IMR-90 (cell line): ENCODE measurements at regions of chr4 and their contacts with region 1.

Region 1: GRCh38 chr4:183261953-183262775 is 57.9 kb downstream of the CLDN22 start:
- DNase-seq: peak; percentile 80
- ATAC-seq: peak; percentile 76
- H3K4me3 ChIP-seq: no peak overlapping the region
- H3K27ac ChIP-seq: peak overlapping the region; percentile 47; the same call in 1 of the 2 replicates
- H3K4me1 ChIP-seq: peaks cover 21% of the 10 kb centered on the region
- H3K27me3 ChIP-seq: no peaks in the 10 kb centered on the region
- CTCF ChIP-seq: peak; percentile 93
- POLR2A ChIP-seq: no peak
- RAD21 ChIP-seq: peak; percentile 85

Region 2: GRCh38 chr4:182448281-182449151 is 813.6 kb before region 1 on chr4:
- CTCF ChIA-PET with region 1: interaction called, 3 read pairs
- POLR2A ChIA-PET with region 1: no interaction called
- dilution Hi-C with region 1: no loop called
- in situ Hi-C with region 1: loop called (anchors 25 kb)
- intact Hi-C with region 1: no loop called
- DNase-seq: peak; percentile 93
- ATAC-seq: peak; percentile 98
- H3K4me3 ChIP-seq: peak overlapping the region; percentile 62
- H3K27ac ChIP-seq: peak overlapping the region; percentile 50
- H3K4me1 ChIP-seq: no peaks in the 10 kb centered on the region
- H3K27me3 ChIP-seq: no peaks in the 10 kb centered on the region
- CTCF ChIP-seq: no peak
- POLR2A ChIP-seq: peak; percentile 61; the same call in 1 of the 2 replicates
- RAD21 ChIP-seq: 0 out of 2 replicates have a peak, but pooled peaks have one; percentile 13

Region 3: GRCh38 chr4:182806259-182807252 is 455.6 kb before region 1 on chr4:
- CTCF ChIA-PET with region 1: no interaction called
- POLR2A ChIA-PET with region 1: no interaction called
- dilution Hi-C with region 1: no loop called
- in situ Hi-C with region 1: no loop called
- intact Hi-C with region 1: loop called (anchors 5 kb)
- DNase-seq: peak; percentile 59
- ATAC-seq: peak; percentile 97
- H3K4me3 ChIP-seq: peak overlapping the region; percentile 46
- H3K27ac ChIP-seq: peak overlapping the region; percentile 53
- H3K4me1 ChIP-seq: no peaks in the 10 kb centered on the region
- H3K27me3 ChIP-seq: no peaks in the 10 kb centered on the region
- CTCF ChIP-seq: peak; percentile 95
- POLR2A ChIP-seq: 0 out of 2 replicates have a peak, but pooled peaks have one; percentile 47
- RAD21 ChIP-seq: peak; percentile 89

Region 4: GRCh38 chr4:182938205-182938645 is 323.9 kb before region 1 on chr4:
- CTCF ChIA-PET with region 1: interaction called, 30 read pairs
- POLR2A ChIA-PET with region 1: no interaction called
- dilution Hi-C with region 1: no loop called
- in situ Hi-C with region 1: loop called (anchors 5 kb)
- intact Hi-C with region 1: loop called (anchors 1 kb)
- DNase-seq: peak; percentile 56
- ATAC-seq: peak; percentile 99
- H3K4me3 ChIP-seq: no peak overlapping the region
- H3K27ac ChIP-seq: no peak overlapping the region
- H3K4me1 ChIP-seq: peaks cover 2% of the 10 kb centered on the region; the same call in 1 of the 2 replicates
- H3K27me3 ChIP-seq: peaks cover 11% of the 10 kb centered on the region
- CTCF ChIP-seq: peak; percentile 90
- POLR2A ChIP-seq: no peak; the same call in 1 of the 2 replicates
- RAD21 ChIP-seq: peak; percentile 95

Region 5: DNA sequence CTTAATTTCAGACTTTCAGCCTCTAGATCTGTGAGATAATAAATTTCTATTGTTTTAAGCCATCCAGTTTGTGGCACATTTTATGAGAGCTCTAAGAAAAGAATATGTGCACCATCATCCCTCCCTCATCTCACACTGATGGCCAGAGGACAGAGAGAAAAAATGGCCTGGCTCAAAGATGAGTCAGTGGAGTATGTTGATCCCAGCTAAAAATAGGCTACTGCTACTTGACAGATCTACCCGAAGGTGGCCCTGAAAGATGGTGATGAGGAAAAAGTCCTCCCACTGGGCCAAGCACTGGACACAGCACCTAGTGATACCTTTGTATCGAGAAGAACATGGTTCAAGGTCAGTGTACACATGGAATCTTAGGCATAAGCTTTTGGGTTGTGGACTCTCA is 306.8 kb before region 1 on chr4:
- CTCF ChIA-PET with region 1: no interaction called
- POLR2A ChIA-PET with region 1: no interaction called
- dilution Hi-C with region 1: no loop called
- in situ Hi-C with region 1: no loop called
- intact Hi-C with region 1: no loop called
- DNase-seq: peak; percentile 68
- ATAC-seq: peak; percentile 57; the same call in 1 of the 2 replicates
- H3K4me3 ChIP-seq: no peak overlapping the region
- H3K27ac ChIP-seq: no peak overlapping the region
- H3K4me1 ChIP-seq: peaks cover 1% of the 10 kb centered on the region; the same call in 1 of the 2 replicates
- H3K27me3 ChIP-seq: no peaks in the 10 kb centered on the region
- CTCF ChIP-seq: no peak
- POLR2A ChIP-seq: no peak
- RAD21 ChIP-seq: no peak

Region 6: GRCh38 chr4:183098723-183099536 is 163.2 kb before region 1 on chr4 and contains the start of gene WWC2:
- CTCF ChIA-PET with region 1: interaction called, 8 read pairs
- POLR2A ChIA-PET with region 1: interaction called, 4 read pairs
- dilution Hi-C with region 1: no loop called
- in situ Hi-C with region 1: no loop called
- intact Hi-C with region 1: loop called (anchors 2 kb)
- DNase-seq: peak; percentile 92
- ATAC-seq: peak; percentile 82
- H3K4me3 ChIP-seq: peak within 1 kb of the TSS; percentile 90
- H3K27ac ChIP-seq: peak within 1 kb of the TSS; percentile 92
- H3K4me1 ChIP-seq: peaks cover 4% of the 10 kb centered on the region
- H3K27me3 ChIP-seq: no peaks in the 10 kb centered on the region
- CTCF ChIP-seq: 0 out of 2 replicates have a peak, but pooled peaks have one; percentile 12
- POLR2A ChIP-seq: peak; percentile 68; the same call in 1 of the 2 replicates
- RAD21 ChIP-seq: peak; percentile 2; the same call in 1 of the 2 replicates
- total RNA-seq, gene WWC2: 27.4 and 28.1 TPM in 2 replicates

Region 7: DNA sequence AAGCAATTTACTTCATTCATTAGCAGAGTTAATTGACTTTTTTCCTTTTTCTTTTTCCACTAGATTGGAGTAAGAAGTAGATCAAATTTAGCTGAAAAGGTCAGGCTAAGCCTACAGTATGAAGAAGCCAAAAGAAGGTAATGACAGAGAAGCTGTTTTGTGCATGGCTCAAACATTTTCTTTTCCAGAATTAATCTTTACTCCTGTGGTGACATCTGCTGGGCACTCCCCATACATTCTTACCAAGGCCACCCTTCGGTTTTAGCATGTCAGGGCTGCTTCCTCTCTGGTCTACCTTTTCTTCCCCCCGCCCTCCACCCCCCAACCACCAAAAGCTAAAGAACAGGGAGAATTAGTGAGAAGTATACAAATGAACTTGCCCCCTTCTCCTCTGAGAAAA is 12.3 kb before region 1 on chr4:
- CTCF ChIA-PET with region 1: interaction called, 17 read pairs
- POLR2A ChIA-PET with region 1: no interaction called
- dilution Hi-C with region 1: no loop called
- in situ Hi-C with region 1: no loop called
- intact Hi-C with region 1: no loop called
- DNase-seq: peak; percentile 52
- ATAC-seq: peak; percentile 75
- H3K4me3 ChIP-seq: no peak overlapping the region
- H3K27ac ChIP-seq: no peak overlapping the region
- H3K4me1 ChIP-seq: no peaks in the 10 kb centered on the region
- H3K27me3 ChIP-seq: no peaks in the 10 kb centered on the region
- CTCF ChIP-seq: peak; percentile 57
- POLR2A ChIP-seq: no peak
- RAD21 ChIP-seq: peak; percentile 68

Region 8: GRCh38 chr4:183398227-183399125 is 136.3 kb after region 1 on chr4:
- CTCF ChIA-PET with region 1: no interaction called
- POLR2A ChIA-PET with region 1: no interaction called
- dilution Hi-C with region 1: no loop called
- in situ Hi-C with region 1: no loop called
- intact Hi-C with region 1: loop called (anchors 1 kb)
- DNase-seq: peak; percentile 69
- ATAC-seq: peak; percentile 98
- H3K4me3 ChIP-seq: peak overlapping the region; percentile 40
- H3K27ac ChIP-seq: no peak overlapping the region; the same call in 1 of the 2 replicates
- H3K4me1 ChIP-seq: peaks cover 4% of the 10 kb centered on the region; the same call in 1 of the 2 replicates
- H3K27me3 ChIP-seq: peaks cover 5% of the 10 kb centered on the region; the same call in 1 of the 2 replicates
- CTCF ChIP-seq: peak; percentile 75
- POLR2A ChIP-seq: no peak
- RAD21 ChIP-seq: peak; percentile 64